ENCODE measurements at regions of chr2 and their contacts with region 1.

Region 1: GRCh38 chr2:162318328-162319180 is at the start of gene IFIH1:
- DNase-seq: peak; percentile 82 to 93 (median 83)
- H3K4me3 ChIP-seq: peak within 1 kb of the TSS; percentile 93 to 97
- H3K4me3 Mint-ChIP-seq: peak within 1 kb of the TSS; percentile 93 to 100 (median 98)
- H3K27ac ChIP-seq: peak within 1 kb of the TSS; percentile 97
- H3K27ac Mint-ChIP-seq: peak within 1 kb of the TSS; percentile 98 to 100 (median 99)
- H3K4me1 ChIP-seq: peaks cover 56% of the 10 kb centered on the region
- H3K4me1 Mint-ChIP-seq: peaks cover 48 to 65% (median 57%) of the 10 kb centered on the region in 4 donors
- H3K27me3 ChIP-seq: no peaks in the 10 kb centered on the region
- H3K27me3 Mint-ChIP-seq: no peaks in the 10 kb centered on the region
- total RNA-seq, gene IFIH1: 30.1 to 31.2 TPM

Region 2: GRCh38 chr2:161992526-161992925 is 326.0 kb before region 1 on chr2:
- CTCF ChIA-PET with region 1: no interaction called
- POLR2A ChIA-PET with region 1: interaction called, 4 read pairs
- intact Hi-C with region 1: loop called (anchors 10 kb)
- DNase-seq: peak; percentile 46 to 62 (median 57)
- H3K4me3 ChIP-seq: peak overlapping the region; percentile 20 to 36
- H3K4me3 Mint-ChIP-seq: peak overlapping the region; percentile 70 to 94 (median 84)
- H3K27ac ChIP-seq: peak overlapping the region; percentile 65
- H3K27ac Mint-ChIP-seq: peak overlapping the region; percentile 95 to 99 (median 98)
- H3K4me1 ChIP-seq: peaks cover 56% of the 10 kb centered on the region
- H3K4me1 Mint-ChIP-seq: peaks cover 41 to 72% (median 50%) of the 10 kb centered on the region in 4 donors
- H3K27me3 ChIP-seq: no peaks in the 10 kb centered on the region
- H3K27me3 Mint-ChIP-seq: no peaks in the 10 kb centered on the region

Region 3: GRCh38 chr2:162333968-162334367 is 15.4 kb after region 1 on chr2:
- CTCF ChIA-PET with region 1: interaction called, 29 read pairs
- POLR2A ChIA-PET with region 1: interaction called, 6 read pairs
- intact Hi-C with region 1: no loop called
- DNase-seq: no peak
- H3K4me3 ChIP-seq: no peak overlapping the region
- H3K4me3 Mint-ChIP-seq: no peak overlapping the region
- H3K27ac ChIP-seq: no peak overlapping the region
- H3K27ac Mint-ChIP-seq: no peak overlapping the region
- H3K4me1 ChIP-seq: no peaks in the 10 kb centered on the region
- H3K4me1 Mint-ChIP-seq: no peaks in the 10 kb centered on the region
- H3K27me3 ChIP-seq: no peaks in the 10 kb centered on the region
- H3K27me3 Mint-ChIP-seq: no peaks in the 10 kb centered on the region

Region 4: GRCh38 chr2:162343824-162344616 is 25.5 kb after region 1 on chr2 and contains the start of gene GCA:
- CTCF ChIA-PET with region 1: interaction called, 14 read pairs
- POLR2A ChIA-PET with region 1: interaction called, 28 read pairs
- intact Hi-C with region 1: loop called (anchors 1 kb)
- DNase-seq: peak; percentile 97 to 98 (median 98)
- H3K4me3 ChIP-seq: peak within 1 kb of the TSS; percentile 50 to 90
- H3K4me3 Mint-ChIP-seq: peak within 1 kb of the TSS; percentile 87 to 97 (median 91)
- H3K27ac ChIP-seq: peak within 1 kb of the TSS; percentile 60
- H3K27ac Mint-ChIP-seq: peak within 1 kb of the TSS; percentile 61 to 96 (median 91)
- H3K4me1 ChIP-seq: peaks cover 10% of the 10 kb centered on the region
- H3K4me1 Mint-ChIP-seq: peaks cover 11 to 20% (median 16%) of the 10 kb centered on the region in 4 donors
- H3K27me3 ChIP-seq: no peaks in the 10 kb centered on the region
- H3K27me3 Mint-ChIP-seq: no peaks in the 10 kb centered on the region
- total RNA-seq, gene GCA: 11.5 to 11.9 TPM